ENCODE measurements at regions of chr14 and their contacts with region 1.

Region 1: GRCh38 chr14:75709207-75709812 is 48.3 kb downstream of the TTLL5 start:
- DNase-seq: peak; percentile 20
- H3K4me3 ChIP-seq: no peak overlapping the region
- H3K27me3 ChIP-seq: no peaks in the 10 kb centered on the region
- CTCF ChIP-seq: peak; percentile 78

Region 2: DNA sequence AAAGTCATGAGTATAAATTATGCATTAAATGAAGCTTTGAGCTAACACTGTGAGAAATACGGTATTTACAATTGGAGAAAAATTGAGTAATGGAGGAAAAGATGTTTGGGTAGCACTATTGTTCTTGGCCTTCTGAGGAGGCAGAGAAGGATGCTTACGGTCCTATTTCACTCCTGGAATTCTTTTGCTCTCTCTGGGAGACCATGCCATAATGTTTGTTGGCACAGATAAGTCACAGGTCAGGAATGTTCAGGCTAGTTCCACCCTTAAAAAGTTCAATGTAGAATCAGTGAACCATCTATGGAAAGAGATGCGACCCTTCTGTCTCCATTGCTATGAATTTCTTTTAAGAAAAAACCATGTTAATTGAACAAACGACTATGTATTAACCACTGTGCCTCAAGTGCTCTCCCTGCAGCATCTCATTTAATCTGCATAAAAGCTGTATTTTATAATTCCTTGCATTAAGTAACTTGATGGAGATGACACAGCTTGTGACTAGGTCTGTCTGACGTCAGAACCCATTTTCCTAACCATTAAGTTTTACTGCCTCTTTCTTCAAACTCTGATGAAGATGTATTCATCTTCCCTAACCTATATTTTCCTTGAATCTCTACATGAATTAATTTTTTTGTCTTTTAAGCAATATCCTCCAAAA is 177.5 kb before region 1 on chr14:
- CTCF ChIA-PET with region 1: no interaction called
- POLR2A ChIA-PET with region 1: no interaction called
- DNase-seq: no peak
- H3K4me3 ChIP-seq: no peak overlapping the region
- H3K27me3 ChIP-seq: no peaks in the 10 kb centered on the region; the same call in 1 of the 2 replicates
- CTCF ChIP-seq: no peak

Region 3: DNA sequence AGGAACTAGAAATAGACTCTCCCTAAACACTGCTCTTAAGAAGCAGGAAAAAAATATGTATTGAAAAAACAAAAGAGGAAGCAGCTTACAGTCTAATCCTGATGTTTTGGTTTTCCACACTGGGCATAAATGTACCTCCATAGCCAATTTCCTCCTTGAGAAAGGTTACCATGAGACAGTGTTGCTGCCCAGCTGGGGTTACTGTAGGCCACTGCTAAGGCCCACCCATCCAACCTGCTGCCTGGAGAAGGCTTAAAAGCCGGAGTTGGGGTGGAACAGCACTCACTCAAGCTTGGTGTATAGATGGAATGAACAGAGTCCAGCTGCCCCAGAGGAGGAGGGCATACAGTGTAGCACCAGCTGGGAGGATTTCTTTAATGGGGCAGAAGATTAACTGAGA is 89.8 kb before region 1 on chr14:
- CTCF ChIA-PET with region 1: no interaction called
- POLR2A ChIA-PET with region 1: no interaction called
- DNase-seq: no peak
- H3K4me3 ChIP-seq: no peak overlapping the region
- H3K27me3 ChIP-seq: no peaks in the 10 kb centered on the region; the same call in 1 of the 2 replicates
- CTCF ChIP-seq: no peak

Region 4: DNA sequence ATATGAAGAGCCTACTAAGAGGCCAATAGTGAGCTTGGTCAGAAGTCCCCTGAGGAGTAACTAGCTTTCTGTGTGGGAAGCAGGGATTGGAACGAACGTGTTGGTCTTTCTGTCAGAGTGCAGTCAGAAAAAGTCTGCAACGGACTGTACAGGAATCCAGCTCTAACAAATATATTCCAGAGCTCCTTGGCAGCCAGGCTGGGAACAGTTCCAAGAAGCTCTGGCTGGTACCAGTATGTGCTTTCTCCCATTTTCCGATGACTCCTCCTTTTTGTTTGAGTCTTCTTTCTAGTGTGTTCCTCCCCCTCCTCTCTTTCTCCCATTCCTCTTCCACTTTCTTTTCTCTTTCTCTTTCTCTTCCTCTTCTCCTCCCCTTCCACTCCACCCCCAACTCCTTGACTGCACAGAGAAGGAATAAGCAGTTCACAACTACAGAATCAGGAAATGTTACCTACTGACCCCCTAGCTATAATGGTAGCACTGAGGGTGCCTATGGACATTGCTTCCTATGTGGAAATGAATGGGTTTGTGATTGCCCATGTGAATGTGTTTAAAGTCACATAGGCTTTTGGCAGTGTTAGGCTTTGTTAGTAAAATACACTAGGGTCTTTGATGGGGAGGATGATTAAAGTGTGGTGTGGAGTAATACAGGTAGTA is 11.7 kb after region 1 on chr14:
- CTCF ChIA-PET with region 1: interaction called, 11 read pairs
- POLR2A ChIA-PET with region 1: no interaction called
- DNase-seq: no peak
- H3K4me3 ChIP-seq: no peak overlapping the region
- H3K27me3 ChIP-seq: no peaks in the 10 kb centered on the region
- CTCF ChIP-seq: no peak

Region 5: DNA sequence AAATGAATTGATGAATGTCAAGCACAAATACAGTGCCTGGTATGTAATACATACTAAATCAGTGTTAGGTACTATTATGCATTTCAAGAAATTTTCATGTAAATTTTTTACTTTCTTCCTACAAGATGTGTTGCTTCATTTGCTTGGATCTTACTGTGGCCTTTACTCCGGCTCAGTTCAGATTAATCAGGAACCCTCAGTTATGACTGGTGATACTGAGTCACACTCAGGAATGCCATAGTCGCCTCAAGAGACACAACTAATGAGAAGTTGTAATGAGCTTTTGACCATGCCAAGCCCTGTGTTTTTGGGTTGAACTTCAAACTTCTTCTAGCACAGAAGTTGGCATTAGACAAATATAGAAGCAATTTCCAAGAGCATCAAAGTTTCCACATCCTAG is 176.5 kb after region 1 on chr14:
- CTCF ChIA-PET with region 1: interaction called, 11 read pairs
- POLR2A ChIA-PET with region 1: no interaction called
- DNase-seq: no peak
- H3K4me3 ChIP-seq: no peak overlapping the region
- H3K27me3 ChIP-seq: no peaks in the 10 kb centered on the region
- CTCF ChIP-seq: no peak

Region 6: DNA sequence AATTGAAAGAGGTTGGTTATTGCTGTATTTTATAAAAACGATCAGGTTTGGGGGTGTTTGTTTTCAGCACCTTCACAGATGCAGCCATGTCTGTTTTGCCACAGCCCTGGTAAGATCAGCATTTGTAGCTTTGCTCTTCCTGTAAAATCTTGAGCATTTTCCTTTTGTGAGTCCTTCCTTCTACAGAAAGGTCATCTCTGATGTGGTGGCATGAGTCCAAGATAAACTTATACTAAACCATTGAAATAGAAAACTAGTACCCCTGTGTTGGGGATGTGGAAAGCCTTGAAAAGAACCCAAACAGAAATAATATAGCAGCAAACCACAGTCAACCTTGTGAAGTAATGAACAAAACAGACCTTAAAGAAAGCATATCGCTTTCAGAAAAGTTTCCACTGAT is 187.0 kb after region 1 on chr14:
- CTCF ChIA-PET with region 1: no interaction called
- POLR2A ChIA-PET with region 1: no interaction called
- DNase-seq: no peak
- H3K4me3 ChIP-seq: no peak overlapping the region
- H3K27me3 ChIP-seq: no peaks in the 10 kb centered on the region
- CTCF ChIP-seq: no peak

Region 7: GRCh38 chr14:75982266-75983018 is 273.1 kb after region 1 on chr14:
- CTCF ChIA-PET with region 1: interaction called, 296 read pairs
- POLR2A ChIA-PET with region 1: interaction called, 4 read pairs
- DNase-seq: no peak
- H3K4me3 ChIP-seq: peak overlapping the region; percentile 54
- H3K27me3 ChIP-seq: no peaks in the 10 kb centered on the region
- CTCF ChIP-seq: peak; percentile 72

Region 8: GRCh38 chr14:76050797-76051392 is 341.6 kb after region 1 on chr14:
- CTCF ChIA-PET with region 1: interaction called, 10 read pairs
- POLR2A ChIA-PET with region 1: no interaction called
- DNase-seq: peak; percentile 9
- H3K4me3 ChIP-seq: no peak overlapping the region
- H3K27me3 ChIP-seq: no peaks in the 10 kb centered on the region
- CTCF ChIP-seq: peak; percentile 67

Region 9: GRCh38 chr14:76386915-76387782 is 677.8 kb after region 1 on chr14:
- CTCF ChIA-PET with region 1: interaction called, 23 read pairs
- POLR2A ChIA-PET with region 1: no interaction called
- DNase-seq: no peak
- H3K4me3 ChIP-seq: no peak overlapping the region
- H3K27me3 ChIP-seq: peaks cover 11% of the 10 kb centered on the region
- CTCF ChIP-seq: peak; percentile 99